ENCODE measurements at regions of chr11 and their contacts with region 1.

Region 1: DNA sequence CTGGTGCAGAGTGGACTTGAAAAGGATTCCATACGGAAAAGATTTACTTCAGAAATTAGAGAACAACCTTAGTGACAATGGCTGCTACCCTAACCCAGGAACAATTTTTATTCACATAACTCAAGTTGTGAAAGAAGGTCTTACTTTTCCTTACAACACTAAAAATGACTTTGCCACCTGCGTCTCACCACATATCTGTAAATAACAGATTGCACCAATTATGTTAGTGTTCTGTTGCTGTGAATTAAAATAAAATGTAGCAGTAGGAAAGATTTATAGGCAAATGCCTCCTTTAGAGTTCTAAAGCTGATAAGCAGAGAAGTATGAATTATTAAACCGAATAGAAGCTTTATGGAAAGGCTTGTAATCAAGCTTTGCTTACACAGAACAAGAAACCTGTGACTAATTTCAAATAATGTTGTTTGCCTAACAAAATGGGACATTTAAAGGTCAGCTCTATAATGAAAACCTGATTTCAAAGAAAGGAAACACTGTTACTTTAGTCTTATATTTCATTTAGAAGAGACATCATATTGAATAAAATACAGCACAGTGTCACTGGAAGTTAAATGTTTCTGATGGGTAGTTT is 2237.8 kb downstream of the LRRC4C start:
- DNase-seq: peak; percentile 79
- H3K4me3 ChIP-seq: no peak overlapping the region
- H3K27ac ChIP-seq: peak overlapping the region; percentile 98
- H3K4me1 ChIP-seq: peaks cover 40% of the 10 kb centered on the region
- H3K27me3 ChIP-seq: no peaks in the 10 kb centered on the region
- CTCF ChIP-seq: no peak

Region 2: GRCh38 chr11:38402063-38402462 is 819.6 kb before region 1 on chr11:
- CTCF ChIA-PET with region 1: no interaction called
- POLR2A ChIA-PET with region 1: no interaction called
- intact Hi-C with region 1: loop called (anchors 1 kb)
- DNase-seq: peak; percentile 77
- H3K4me3 ChIP-seq: no peak overlapping the region
- H3K27ac ChIP-seq: peak overlapping the region; percentile 83
- H3K4me1 ChIP-seq: peaks cover 24% of the 10 kb centered on the region
- H3K27me3 ChIP-seq: no peaks in the 10 kb centered on the region
- CTCF ChIP-seq: no peak

Region 3: GRCh38 chr11:39036021-39036420 is 185.6 kb before region 1 on chr11:
- CTCF ChIA-PET with region 1: no interaction called
- POLR2A ChIA-PET with region 1: no interaction called
- intact Hi-C with region 1: loop called (anchors 2 kb)
- DNase-seq: no peak
- H3K4me3 ChIP-seq: no peak overlapping the region
- H3K27ac ChIP-seq: no peak overlapping the region
- H3K4me1 ChIP-seq: peaks cover 19% of the 10 kb centered on the region
- H3K27me3 ChIP-seq: no peaks in the 10 kb centered on the region
- CTCF ChIP-seq: no peak

Region 4: GRCh38 chr11:39247570-39248137 is 26.0 kb after region 1 on chr11:
- CTCF ChIA-PET with region 1: no interaction called
- POLR2A ChIA-PET with region 1: no interaction called
- intact Hi-C with region 1: no loop called
- DNase-seq: no peak
- H3K4me3 ChIP-seq: no peak overlapping the region
- H3K27ac ChIP-seq: no peak overlapping the region
- H3K4me1 ChIP-seq: no peaks in the 10 kb centered on the region
- H3K27me3 ChIP-seq: no peaks in the 10 kb centered on the region
- CTCF ChIP-seq: no peak

Region 5: DNA sequence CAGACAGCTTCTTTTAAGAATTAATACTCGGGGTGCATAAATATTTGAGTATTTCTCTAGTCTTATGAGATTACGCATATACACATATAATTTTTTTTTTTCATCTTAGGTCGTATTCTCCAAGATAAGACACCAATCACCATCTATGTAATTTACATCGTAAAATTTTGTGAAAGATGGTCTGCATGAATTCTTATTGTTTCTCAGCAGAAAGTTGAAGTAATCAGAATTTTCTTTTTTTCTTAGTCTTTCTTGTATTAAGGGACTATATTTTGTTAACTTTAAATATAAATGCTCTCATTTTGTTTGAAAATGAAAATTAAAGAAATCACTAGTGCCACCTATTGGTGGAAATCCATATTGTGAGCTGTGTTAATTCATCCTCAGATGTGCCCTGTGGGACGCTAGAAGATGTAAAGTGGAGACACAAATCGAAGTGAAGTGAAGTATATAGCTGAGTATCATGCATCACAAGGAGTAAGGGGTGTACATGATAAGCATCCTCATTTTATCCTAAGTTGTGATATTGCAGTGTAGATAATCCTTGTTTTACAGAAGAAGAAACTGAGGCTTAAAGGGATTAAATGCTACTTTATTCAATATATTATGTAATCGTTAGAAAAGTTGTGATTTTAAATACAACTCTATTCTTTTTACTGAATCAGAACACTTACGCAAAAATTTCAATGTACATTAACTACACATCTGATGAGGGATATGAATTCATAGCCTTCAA is 153.5 kb after region 1 on chr11:
- CTCF ChIA-PET with region 1: no interaction called
- POLR2A ChIA-PET with region 1: no interaction called
- intact Hi-C with region 1: loop called (anchors 2 kb)
- DNase-seq: peak; percentile 92
- H3K4me3 ChIP-seq: no peak overlapping the region
- H3K27ac ChIP-seq: peak overlapping the region; percentile 3
- H3K4me1 ChIP-seq: peaks cover 11% of the 10 kb centered on the region
- H3K27me3 ChIP-seq: no peaks in the 10 kb centered on the region
- CTCF ChIP-seq: peak; percentile 97

Region 6: DNA sequence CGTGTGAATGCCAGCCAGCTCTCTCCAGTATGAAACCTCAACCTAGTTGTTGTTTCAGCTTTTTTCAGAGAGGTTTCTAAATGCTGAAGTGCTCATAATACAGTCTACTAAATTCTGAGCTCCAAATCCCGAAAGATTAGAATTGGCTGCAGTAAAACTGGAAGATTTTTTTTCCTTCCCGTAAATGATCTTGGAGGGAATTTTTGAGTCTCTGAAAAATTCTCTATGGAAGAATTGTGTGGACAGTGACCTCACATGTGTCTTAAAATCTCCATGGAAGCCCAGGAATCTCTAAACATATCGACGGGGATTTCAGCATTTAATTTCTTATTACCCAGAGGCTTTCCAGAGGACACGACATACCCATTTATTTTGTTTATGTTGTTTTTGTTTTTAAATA is 738.6 kb after region 1 on chr11:
- CTCF ChIA-PET with region 1: no interaction called
- POLR2A ChIA-PET with region 1: no interaction called
- intact Hi-C with region 1: no loop called
- DNase-seq: no peak
- H3K4me3 ChIP-seq: no peak overlapping the region
- H3K27ac ChIP-seq: no peak overlapping the region
- H3K4me1 ChIP-seq: no peaks in the 10 kb centered on the region
- H3K27me3 ChIP-seq: no peaks in the 10 kb centered on the region
- CTCF ChIP-seq: no peak

Region 7: DNA sequence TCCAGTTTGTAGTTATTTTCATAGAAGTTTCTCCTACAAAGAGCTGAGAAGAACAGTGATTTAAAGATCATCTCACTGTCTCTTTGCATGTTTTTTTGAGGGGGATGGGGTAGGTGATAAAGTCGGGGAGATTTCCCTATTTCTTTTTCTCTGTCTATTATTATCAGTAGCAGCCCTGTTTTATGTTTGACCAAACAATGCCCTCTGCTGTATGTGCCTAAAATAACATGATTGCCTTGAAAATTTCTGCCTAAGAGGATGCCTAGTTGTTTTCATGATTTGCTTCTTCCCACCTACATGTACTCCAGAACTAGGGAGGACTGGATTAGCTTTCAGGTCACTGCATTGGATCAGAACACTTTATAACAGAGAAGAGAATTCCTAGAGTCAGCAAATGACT is 907.6 kb after region 1 on chr11:
- CTCF ChIA-PET with region 1: interaction called, 8 read pairs
- POLR2A ChIA-PET with region 1: no interaction called
- intact Hi-C with region 1: loop called (anchors 1 kb)
- DNase-seq: peak; percentile 90
- H3K4me3 ChIP-seq: no peak overlapping the region
- H3K27ac ChIP-seq: peak overlapping the region; percentile 31
- H3K4me1 ChIP-seq: peaks cover 69% of the 10 kb centered on the region
- H3K27me3 ChIP-seq: no peaks in the 10 kb centered on the region
- CTCF ChIP-seq: peak; percentile 93